ENCODE measurements at regions of chr2 and their contacts with region 1.

Region 1: DNA sequence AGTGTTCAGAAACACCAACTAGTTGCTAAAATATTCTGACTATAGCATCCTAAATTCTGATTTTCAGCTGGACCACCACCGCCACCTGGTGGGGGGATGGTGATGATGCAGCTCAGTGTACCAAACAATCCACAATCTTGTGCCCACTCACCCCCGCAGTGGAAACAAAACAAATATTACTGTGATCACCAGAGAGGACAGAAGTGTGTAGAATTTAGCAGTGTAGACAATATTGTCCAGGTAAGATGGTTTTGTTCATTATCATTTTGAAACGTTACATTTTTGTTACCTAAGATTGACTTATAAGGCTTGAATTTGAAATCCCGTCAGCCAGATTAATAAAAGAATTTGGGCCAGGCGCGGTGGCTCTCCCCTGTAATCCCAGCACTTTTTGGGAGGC is 31.7 kb upstream of the UBXN4 start:
- DNase-seq: peak; percentile 25 to 42 (median 40)
- H3K4me3 ChIP-seq: no peak overlapping the region
- H3K4me3 Mint-ChIP-seq: no peak overlapping the region
- H3K27ac ChIP-seq: no peak overlapping the region
- H3K27ac Mint-ChIP-seq: no peak overlapping the region
- H3K4me1 ChIP-seq: no peaks in the 10 kb centered on the region
- H3K4me1 Mint-ChIP-seq: no peaks in the 10 kb centered on the region
- H3K27me3 ChIP-seq: no peaks in the 10 kb centered on the region
- H3K27me3 Mint-ChIP-seq: no peaks in the 10 kb centered on the region
- CTCF ChIP-seq: peak; percentile 96

Region 2: DNA sequence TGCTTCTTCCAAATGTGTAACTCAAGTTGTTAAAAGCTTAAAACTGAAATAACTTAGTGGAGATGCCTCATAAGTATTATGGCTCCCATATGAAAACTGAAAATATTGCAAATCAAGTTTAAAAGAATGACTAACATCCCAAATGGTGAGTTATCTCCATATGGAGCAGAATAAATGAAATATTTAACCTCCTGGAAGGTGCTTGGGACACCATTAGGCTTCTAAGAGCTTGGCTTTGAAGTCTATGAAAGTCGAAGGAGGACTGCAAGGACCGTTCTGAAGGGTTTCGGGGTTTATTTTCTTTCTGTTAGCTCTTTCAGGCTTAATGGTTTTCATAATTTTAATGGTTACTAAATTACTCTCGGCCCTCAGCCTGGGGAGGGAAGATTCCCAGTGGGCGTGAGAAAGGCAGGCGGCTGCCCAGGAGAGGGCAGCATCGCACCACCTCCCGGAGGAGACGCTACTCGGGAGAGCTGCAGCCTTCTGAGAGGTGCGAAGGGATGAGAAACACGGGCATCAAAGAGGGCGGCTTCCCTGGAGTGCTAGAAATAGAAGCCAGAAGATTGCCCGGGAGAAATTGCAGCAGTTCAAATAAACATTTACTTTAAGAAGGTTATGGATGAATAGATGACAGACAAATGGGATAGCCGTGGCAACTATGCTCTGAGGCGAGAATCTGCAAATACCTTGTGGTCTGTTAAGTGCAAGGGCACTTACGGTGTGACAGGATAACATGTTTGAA is 705.8 kb before region 1 on chr2:
- intact Hi-C with region 1: loop called (anchors 5 to 10 kb)
- DNase-seq: peak; percentile 22 to 45 (median 40)
- H3K4me3 ChIP-seq: no peak overlapping the region
- H3K4me3 Mint-ChIP-seq: no peak overlapping the region
- H3K27ac ChIP-seq: no peak overlapping the region
- H3K27ac Mint-ChIP-seq: peak overlapping the region in 1 of 7 donors; percentile 31
- H3K4me1 ChIP-seq: no peaks in the 10 kb centered on the region
- H3K4me1 Mint-ChIP-seq: peaks cover 5% of the 10 kb centered on the region
- H3K27me3 ChIP-seq: peaks cover 2 to 11% of the 10 kb centered on the region in 2 donors
- H3K27me3 Mint-ChIP-seq: peaks cover 5 to 23% (median 6%) of the 10 kb centered on the region in 3 donors
- CTCF ChIP-seq: peak; percentile 87

Region 3: GRCh38 chr2:135694711-135695110 is 15.3 kb before region 1 on chr2:
- intact Hi-C with region 1: no loop called
- DNase-seq: no peak
- H3K4me3 ChIP-seq: no peak overlapping the region
- H3K4me3 Mint-ChIP-seq: no peak overlapping the region
- H3K27ac ChIP-seq: no peak overlapping the region
- H3K27ac Mint-ChIP-seq: peak overlapping the region in 1 of 7 donors; percentile 3
- H3K4me1 ChIP-seq: no peaks in the 10 kb centered on the region
- H3K4me1 Mint-ChIP-seq: no peaks in the 10 kb centered on the region
- H3K27me3 ChIP-seq: no peaks in the 10 kb centered on the region
- H3K27me3 Mint-ChIP-seq: no peaks in the 10 kb centered on the region
- CTCF ChIP-seq: no peak